Psoas muscle (tissue), 8 donors: ENCODE measurements at regions of chr16 and their contacts with region 1.

Region 1: DNA sequence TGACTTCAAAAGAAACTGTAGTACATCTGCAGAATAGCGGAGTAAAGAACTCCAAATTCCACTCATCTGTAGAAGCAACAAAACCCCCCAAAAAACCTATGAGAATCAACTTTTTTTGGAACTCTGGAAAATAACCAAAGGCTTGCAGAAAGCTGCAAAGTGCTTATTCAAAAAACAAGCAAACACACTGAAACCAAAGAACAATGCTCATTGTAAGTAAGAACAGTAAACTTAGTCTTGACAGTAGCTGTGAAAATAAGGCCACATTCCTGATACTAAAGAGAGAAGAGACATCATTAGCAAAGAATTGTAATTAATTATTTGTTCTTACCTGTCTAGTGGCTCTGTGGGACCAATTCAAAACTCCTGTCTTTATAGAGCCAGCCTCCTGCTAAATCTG is 534.3 kb upstream of the C16orf82 start:
- DNase-seq: no peak
- ATAC-seq: no peak
- H3K4me3 ChIP-seq: no peak overlapping the region
- H3K27ac ChIP-seq: no peak overlapping the region
- H3K4me1 ChIP-seq: no peaks in the 10 kb centered on the region
- H3K27me3 ChIP-seq: no peaks in the 10 kb centered on the region
- CTCF ChIP-seq: no peak

Region 2: GRCh38 chr16:26521626-26522025 is 10.8 kb before region 1 on chr16:
- intact Hi-C with region 1: loop called in 1 of 2 experiments (anchors 1 kb)
- DNase-seq: no peak
- ATAC-seq: no peak
- H3K4me3 ChIP-seq: no peak overlapping the region
- H3K27ac ChIP-seq: no peak overlapping the region
- H3K4me1 ChIP-seq: no peaks in the 10 kb centered on the region
- H3K27me3 ChIP-seq: no peaks in the 10 kb centered on the region
- CTCF ChIP-seq: no peak